Right ventricle myocardium inferior (tissue), 1 donor: ENCODE measurements at regions of chr10 and their contacts with region 1.

Region 1: DNA sequence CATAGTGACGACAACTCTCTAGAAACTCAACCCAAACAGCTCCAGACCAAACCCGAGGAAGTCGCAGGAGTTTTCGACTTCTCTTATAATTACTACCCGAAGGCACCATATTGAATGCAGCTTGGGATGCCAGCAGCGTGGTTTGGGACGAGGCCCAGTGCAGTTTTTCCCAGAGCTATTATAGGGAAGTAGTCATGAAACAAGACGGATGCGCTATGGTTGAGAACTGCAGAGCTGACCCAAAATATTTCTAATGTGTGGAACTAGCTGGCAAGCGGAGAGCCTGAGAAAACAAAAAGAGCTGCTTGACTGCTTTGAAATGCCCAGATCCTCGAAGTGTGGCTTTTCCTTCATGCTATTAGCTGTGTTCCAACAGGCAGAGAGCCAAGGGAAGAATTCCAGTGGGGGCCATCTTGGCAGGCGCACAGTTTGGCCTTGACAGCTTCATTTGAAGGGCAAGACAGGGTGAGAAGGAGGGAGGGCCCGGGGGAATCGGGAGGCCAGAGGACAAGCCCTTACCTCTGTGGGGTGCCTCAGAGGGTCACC is 122.7 kb downstream of the CUL2 start:
- DNase-seq: no peak
- ATAC-seq: peak; percentile 70

Region 2: DNA sequence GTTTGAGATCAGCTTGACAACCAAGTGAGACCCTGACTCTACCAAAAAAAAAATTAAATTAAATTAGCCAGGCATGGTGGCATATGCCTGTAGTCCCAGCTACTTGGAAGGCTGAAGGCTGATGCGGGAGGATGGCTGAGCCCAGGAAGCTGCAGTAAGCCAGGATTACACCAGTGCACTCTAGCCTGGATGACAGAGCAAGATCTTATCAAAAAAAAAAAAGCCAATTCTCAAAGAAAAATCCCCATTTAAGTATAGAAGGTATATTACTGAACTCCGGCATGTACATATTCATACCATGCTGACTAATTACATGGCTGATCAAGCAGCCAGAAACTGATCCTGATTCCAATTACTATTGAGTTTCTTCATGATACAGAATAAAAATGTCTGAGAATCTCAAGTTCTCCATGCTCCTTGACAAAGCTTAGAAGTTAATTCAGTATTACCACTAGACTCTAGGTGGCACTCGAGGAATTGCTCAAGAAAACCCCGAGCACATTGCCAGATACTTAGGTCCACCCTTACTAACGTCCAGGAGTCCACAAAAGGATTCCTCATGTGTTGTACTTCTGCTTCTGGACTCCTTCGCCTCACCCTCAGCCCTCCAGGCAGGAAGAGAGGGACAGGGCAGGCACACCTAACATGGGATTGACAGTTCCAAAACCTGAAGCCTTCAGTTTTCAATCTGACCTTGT is 301.3 kb before region 1 on chr10:
- intact Hi-C with region 1: loop called (anchors 5 kb)
- DNase-seq: no peak
- ATAC-seq: peak; percentile 86

Region 3: DNA sequence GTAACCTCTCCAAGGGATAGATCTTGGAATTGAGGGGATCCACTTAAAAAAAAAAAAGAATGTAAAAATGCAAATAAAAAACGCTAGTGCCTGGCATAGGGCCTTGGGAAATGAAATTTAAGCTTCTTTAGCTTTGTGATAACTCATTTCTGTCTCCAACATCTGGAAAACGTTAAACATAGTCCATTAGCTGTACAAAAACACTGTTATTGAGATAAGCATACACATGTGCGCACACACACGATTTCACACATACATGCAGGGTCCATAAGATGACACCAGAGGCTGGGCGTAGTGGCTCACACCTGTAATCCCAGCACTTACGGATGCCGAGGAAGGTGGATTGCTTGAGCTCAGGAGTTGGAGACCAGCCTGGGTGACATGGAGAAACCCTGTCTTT is 136.5 kb after region 1 on chr10:
- intact Hi-C with region 1: no loop called
- DNase-seq: no peak
- ATAC-seq: no peak